ENCODE measurements at regions of chr10 and their contacts with region 1.

Region 1: DNA sequence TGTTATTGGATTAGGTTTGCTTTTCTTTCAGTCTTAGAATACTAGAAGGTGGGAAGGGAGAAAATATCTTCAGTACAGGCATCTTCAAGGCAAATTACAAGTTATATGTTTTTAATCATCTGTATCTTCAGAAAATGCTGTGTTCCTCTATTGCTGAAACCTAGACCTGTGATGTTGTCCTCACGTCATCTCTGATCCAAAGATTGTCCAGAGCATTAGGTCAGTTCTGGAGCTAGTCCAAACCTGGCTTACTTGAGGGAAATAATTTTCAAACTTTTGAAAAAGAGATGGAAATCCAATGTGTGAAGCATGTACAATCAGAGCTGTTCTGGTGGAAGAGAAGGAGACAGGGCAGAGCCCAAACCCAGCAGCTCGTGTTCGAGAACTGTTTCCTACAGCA is 217.3 kb downstream of the ZEB1 start:
- DNase-seq: no peak
- ATAC-seq: no peak
- H3K4me3 ChIP-seq: no peak overlapping the region
- H3K27ac ChIP-seq: no peak overlapping the region
- H3K4me1 ChIP-seq: no peaks in the 10 kb centered on the region
- H3K27me3 ChIP-seq: no peaks in the 10 kb centered on the region
- CTCF ChIP-seq: no peak
- EP300 ChIP-seq: no peak
- POLR2A ChIP-seq: no peak
- RAD21 ChIP-seq: no peak

Region 2: DNA sequence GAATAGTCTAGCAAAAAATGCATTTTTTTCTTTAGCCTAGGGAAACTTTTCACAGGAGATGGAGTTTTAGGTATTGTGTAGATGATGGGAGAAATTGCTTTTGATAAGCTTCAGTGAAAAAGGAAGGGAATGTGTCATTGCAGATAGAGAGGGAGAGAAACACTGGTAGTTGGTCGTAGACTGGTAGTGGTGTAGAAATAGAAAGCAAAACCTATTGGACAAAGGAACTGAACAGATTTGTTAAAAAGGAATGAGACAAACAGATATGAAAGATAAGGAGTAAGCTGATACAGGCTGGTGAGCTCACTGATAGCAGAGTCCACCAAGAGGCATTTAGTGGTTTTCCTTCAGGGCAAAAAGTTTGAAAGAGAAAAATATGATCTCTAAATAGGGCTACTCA is 123.0 kb before region 1 on chr10:
- CTCF ChIA-PET with region 1: no interaction called
- POLR2A ChIA-PET with region 1: no interaction called
- RAD21 ChIA-PET with region 1: no interaction called
- SMC1A ChIA-PET with region 1: no interaction called
- in situ Hi-C with region 1: no loop called
- intact Hi-C with region 1: no loop called
- DNase-seq: no peak
- ATAC-seq: peak; percentile 74
- H3K4me3 ChIP-seq: no peak overlapping the region
- H3K27ac ChIP-seq: no peak overlapping the region
- H3K4me1 ChIP-seq: no peaks in the 10 kb centered on the region
- H3K27me3 ChIP-seq: no peaks in the 10 kb centered on the region
- CTCF ChIP-seq: no peak
- EP300 ChIP-seq: no peak
- POLR2A ChIP-seq: no peak
- RAD21 ChIP-seq: no peak

Region 3: GRCh38 chr10:31479752-31480151 is 56.5 kb before region 1 on chr10:
- CTCF ChIA-PET with region 1: no interaction called
- POLR2A ChIA-PET with region 1: no interaction called
- RAD21 ChIA-PET with region 1: no interaction called
- SMC1A ChIA-PET with region 1: no interaction called
- in situ Hi-C with region 1: no loop called
- intact Hi-C with region 1: no loop called
- DNase-seq: no peak
- ATAC-seq: no peak
- H3K4me3 ChIP-seq: no peak overlapping the region
- H3K27ac ChIP-seq: no peak overlapping the region
- H3K4me1 ChIP-seq: no peaks in the 10 kb centered on the region
- H3K27me3 ChIP-seq: no peaks in the 10 kb centered on the region
- CTCF ChIP-seq: no peak
- EP300 ChIP-seq: no peak
- POLR2A ChIP-seq: no peak
- RAD21 ChIP-seq: no peak

Region 4: GRCh38 chr10:31770307-31770902 is 234.1 kb after region 1 on chr10:
- CTCF ChIA-PET with region 1: no interaction called
- POLR2A ChIA-PET with region 1: no interaction called
- RAD21 ChIA-PET with region 1: no interaction called
- SMC1A ChIA-PET with region 1: no interaction called
- in situ Hi-C with region 1: no loop called
- intact Hi-C with region 1: loop called (anchors 10 kb)
- DNase-seq: no peak
- ATAC-seq: peak; percentile 92
- H3K4me3 ChIP-seq: no peak overlapping the region
- H3K27ac ChIP-seq: no peak overlapping the region
- H3K4me1 ChIP-seq: no peaks in the 10 kb centered on the region
- H3K27me3 ChIP-seq: no peaks in the 10 kb centered on the region
- CTCF ChIP-seq: peak; percentile 79 to 88 (median 86)
- EP300 ChIP-seq: no peak
- POLR2A ChIP-seq: no peak
- RAD21 ChIP-seq: peak; percentile 86

Region 5: DNA sequence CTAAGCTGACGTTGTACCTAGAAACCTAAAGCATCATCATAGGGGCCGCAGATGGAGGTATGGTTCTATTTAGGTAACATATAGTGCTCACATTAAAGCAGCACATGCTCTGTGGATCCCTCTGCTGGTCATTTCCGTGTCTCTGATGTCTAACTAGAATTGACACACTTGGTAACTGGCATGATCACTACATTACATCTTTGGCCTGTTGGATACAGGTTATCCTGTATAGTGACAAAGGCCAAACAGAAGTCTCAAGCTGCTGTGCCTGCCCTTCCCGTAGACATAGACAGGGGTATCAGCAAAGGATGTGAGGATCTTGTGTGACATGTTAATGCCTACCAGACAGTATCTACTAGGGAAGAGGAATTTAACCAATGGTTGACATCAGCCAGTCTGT is 468.7 kb after region 1 on chr10:
- CTCF ChIA-PET with region 1: no interaction called
- POLR2A ChIA-PET with region 1: no interaction called
- RAD21 ChIA-PET with region 1: no interaction called
- SMC1A ChIA-PET with region 1: no interaction called
- in situ Hi-C with region 1: no loop called
- intact Hi-C with region 1: no loop called
- DNase-seq: peak; percentile 16
- ATAC-seq: peak; percentile 90
- H3K4me3 ChIP-seq: no peak overlapping the region
- H3K27ac ChIP-seq: no peak overlapping the region
- H3K4me1 ChIP-seq: no peaks in the 10 kb centered on the region
- H3K27me3 ChIP-seq: no peaks in the 10 kb centered on the region
- CTCF ChIP-seq: peak; percentile 63 to 65 (median 63)
- EP300 ChIP-seq: no peak
- POLR2A ChIP-seq: no peak; the same call in none of the 2 replicates
- RAD21 ChIP-seq: peak; percentile 61

Measured in GM12878 (cell line).